ENCODE measurements at regions of chr12 and their contacts with region 1.

Region 1: DNA sequence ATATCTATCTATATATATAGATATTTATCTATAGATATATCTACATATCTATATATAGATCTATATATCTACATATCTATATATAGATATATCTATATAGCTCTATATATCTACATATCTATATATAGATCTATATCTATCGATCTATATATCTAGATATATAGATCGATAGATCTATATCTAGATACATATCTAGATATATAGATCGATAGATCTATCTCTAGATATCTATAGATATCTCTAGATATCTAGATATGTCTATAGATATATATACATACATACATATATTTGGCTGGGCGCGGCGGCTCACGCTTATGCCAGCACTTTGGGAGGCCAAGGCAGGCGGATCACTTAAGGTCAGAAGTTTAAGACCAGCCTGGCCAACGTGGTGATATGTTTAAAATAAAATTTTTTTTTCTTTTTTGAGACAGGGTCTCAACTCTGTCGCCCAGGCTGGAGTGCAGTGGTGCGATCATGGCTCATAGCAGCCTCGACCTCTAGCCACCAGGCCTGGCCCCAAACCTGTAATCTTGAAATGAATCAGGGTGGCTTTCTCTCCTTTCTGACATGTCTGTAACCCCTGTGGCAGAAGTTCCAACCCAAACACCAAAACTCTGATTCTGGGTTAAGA is 18.1 kb downstream of the ARPC3 start:
- DNase-seq: no peak
- H3K4me3 ChIP-seq: no peak overlapping the region
- H3K27ac ChIP-seq: no peak overlapping the region
- H3K4me1 ChIP-seq: no peaks in the 10 kb centered on the region
- CTCF ChIP-seq: no peak

Region 2: GRCh38 chr12:110245369-110245772 is 186.7 kb before region 1 on chr12:
- CTCF ChIA-PET with region 1: no interaction called
- POLR2A ChIA-PET with region 1: no interaction called
- intact Hi-C with region 1: no loop called
- DNase-seq: peak; percentile 68
- H3K4me3 ChIP-seq: no peak overlapping the region
- H3K27ac ChIP-seq: no peak overlapping the region
- H3K4me1 ChIP-seq: peaks cover 5% of the 10 kb centered on the region
- CTCF ChIP-seq: peak; percentile 86

Region 3: DNA sequence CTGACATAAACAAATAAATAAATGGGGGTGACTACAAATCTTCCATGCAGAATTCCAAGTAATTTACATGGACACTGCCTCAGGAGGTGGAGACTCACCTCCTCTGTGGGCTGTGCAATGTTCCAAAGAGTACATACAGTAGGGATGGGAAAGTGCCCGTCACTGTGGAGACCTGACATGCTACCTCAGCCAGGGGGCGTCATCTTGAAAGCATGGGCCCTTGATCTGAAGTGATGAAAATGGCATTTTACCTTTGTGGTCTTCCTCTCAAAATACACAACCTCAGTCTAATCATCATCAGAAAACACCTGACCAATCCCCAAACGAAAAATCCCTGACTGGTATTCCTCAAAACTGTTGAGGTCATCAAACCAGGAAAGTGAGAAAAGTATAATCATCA is 77.0 kb before region 1 on chr12:
- CTCF ChIA-PET with region 1: no interaction called
- POLR2A ChIA-PET with region 1: interaction called, 3 read pairs
- intact Hi-C with region 1: loop called (anchors 1 kb)
- DNase-seq: peak; percentile 74
- H3K4me3 ChIP-seq: no peak overlapping the region
- H3K27ac ChIP-seq: no peak overlapping the region
- H3K4me1 ChIP-seq: no peaks in the 10 kb centered on the region
- CTCF ChIP-seq: peak; percentile 89

Region 4: GRCh38 chr12:110379197-110379596 is 52.9 kb before region 1 on chr12:
- CTCF ChIA-PET with region 1: interaction called, 4 read pairs
- POLR2A ChIA-PET with region 1: interaction called, 10 read pairs
- intact Hi-C with region 1: loop called (anchors 1 kb)
- DNase-seq: no peak
- H3K4me3 ChIP-seq: no peak overlapping the region
- H3K27ac ChIP-seq: no peak overlapping the region
- H3K4me1 ChIP-seq: peaks cover 20% of the 10 kb centered on the region
- CTCF ChIP-seq: no peak

Measured in OCI-LY7 (cell line).